ENCODE measurements at regions of chr5 and their contacts with region 1.

Region 1: DNA sequence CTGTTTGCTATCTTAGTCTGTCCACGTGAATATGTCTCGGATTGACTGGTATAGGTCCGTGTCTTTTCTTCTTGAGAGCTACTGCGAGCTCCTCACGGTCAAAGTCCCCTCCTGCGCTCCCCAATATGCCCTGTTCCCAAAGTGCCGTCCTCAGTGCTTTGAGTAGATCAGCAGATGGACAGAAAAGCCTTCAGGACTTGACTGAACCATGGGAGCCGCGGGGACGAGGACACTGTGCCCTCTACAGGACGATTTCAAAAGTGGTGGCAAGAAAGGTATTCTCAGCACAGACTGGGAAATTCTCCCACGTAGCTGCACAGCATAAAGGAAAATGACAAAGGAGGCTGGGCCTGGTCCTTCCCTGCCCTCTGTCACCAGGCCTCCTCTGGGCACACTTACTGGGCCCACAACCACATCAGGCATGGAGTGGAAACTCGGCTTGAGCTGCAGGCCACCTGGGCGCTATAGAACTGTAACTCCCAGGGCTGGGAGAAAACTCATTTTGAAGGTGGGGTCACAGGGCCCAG is 16.6 kb upstream of the MTMR12 start:
- DNase-seq: peak; percentile 79
- H3K4me3 ChIP-seq: no peak overlapping the region
- H3K27ac ChIP-seq: peak overlapping the region in 1 of 4 donors; percentile 32
- H3K4me1 ChIP-seq: peaks cover 0 to 16% (median 10%) of the 10 kb centered on the region in 4 donors
- H3K27me3 ChIP-seq: no peaks in the 10 kb centered on the region
- CTCF ChIP-seq: peak in 3 of 4 experiments; percentile 44 to 65 (median 48)
- EP300 ChIP-seq: no peak
- POLR2A ChIP-seq: no peak

Region 2: DNA sequence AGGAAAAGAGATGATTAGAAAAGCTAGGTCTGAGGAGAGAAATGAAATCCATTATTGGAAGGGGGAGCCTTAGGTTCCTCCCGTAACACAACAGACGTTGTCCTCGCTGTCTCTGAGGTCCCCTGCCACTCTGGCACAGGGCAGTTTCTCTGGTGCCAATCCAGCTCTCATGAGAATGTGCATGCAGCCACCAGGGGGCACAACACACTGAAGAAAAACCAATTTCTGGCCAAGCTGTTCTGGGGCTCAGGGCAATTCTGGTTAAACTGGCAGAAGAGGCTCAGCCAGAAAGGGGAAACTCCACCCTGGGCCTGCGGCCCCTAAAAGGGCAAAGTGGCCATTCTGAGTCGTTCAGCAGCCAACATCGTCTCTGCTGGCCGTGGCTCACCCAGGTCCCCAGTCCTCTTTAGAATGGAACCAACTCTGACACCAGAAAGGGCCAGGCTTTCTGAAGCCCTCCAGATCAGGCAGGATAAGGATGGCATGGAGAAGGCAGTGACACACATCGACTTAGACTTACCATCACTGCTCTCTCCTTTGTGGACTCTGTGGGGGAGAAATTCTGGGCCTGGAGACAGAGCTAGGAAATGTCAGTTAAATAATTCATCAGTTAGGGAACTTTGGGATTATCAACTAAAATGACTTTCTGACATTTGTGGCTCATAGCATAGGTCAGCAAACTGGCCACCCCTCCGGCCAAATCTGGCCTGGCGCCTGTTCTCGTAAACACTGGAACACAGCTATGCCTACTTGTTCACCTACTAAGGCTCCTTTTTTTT is 96.7 kb before region 1 on chr5:
- intact Hi-C with region 1: loop called (anchors 5 kb)
- DNase-seq: peak; percentile 86
- H3K4me3 ChIP-seq: no peak overlapping the region
- H3K27ac ChIP-seq: peak overlapping the region; percentile 70 to 76 (median 74)
- H3K4me1 ChIP-seq: peaks cover 0 to 42% (median 32%) of the 10 kb centered on the region in 4 donors
- H3K27me3 ChIP-seq: no peaks in the 10 kb centered on the region
- CTCF ChIP-seq: peak; percentile 70 to 90 (median 76)
- EP300 ChIP-seq: no peak
- POLR2A ChIP-seq: no peak